Heart left ventricle (tissue), 16 donors: ENCODE measurements at regions of chr19 and their contacts with region 1.

Region 1: GRCh38 chr19:55605207-55605636 is 225 bp upstream of the ZNF865 start:
- DNase-seq: peak; percentile 98 to 99 (median 99)
- ATAC-seq: peak; percentile 84 to 92 (median 86)
- H3K4me3 ChIP-seq: peak overlapping the region; percentile 72 to 96 (median 83)
- H3K27ac ChIP-seq: peak overlapping the region; percentile 90 to 98 (median 96)
- H3K4me1 ChIP-seq: peaks cover 4 to 46% (median 31%) of the 10 kb centered on the region in 12 donors
- H3K27me3 ChIP-seq: no peaks in the 10 kb centered on the region
- CTCF ChIP-seq: no peak
- POLR2A ChIP-seq: peak in 1 of 2 donors; percentile 53

Region 2: GRCh38 chr19:55624109-55625003 is 19.1 kb after region 1 on chr19 and contains the start of gene ZNF784:
- intact Hi-C with region 1: loop called in 1 of 10 experiments (anchors 2 kb)
- DNase-seq: peak; percentile 92 to 98 (median 94)
- ATAC-seq: peak; percentile 87 to 97 (median 92)
- H3K4me3 ChIP-seq: peak within 1 kb of the TSS; percentile 7 to 73 (median 63)
- H3K27ac ChIP-seq: peak within 1 kb of the TSS; percentile 78 to 96 (median 92)
- H3K4me1 ChIP-seq: peaks cover 0 to 45% (median 11%) of the 10 kb centered on the region in 12 donors
- H3K27me3 ChIP-seq: no peaks in the 10 kb centered on the region
- CTCF ChIP-seq: no peak
- POLR2A ChIP-seq: peak in 1 of 2 donors; percentile 42
- total RNA-seq, gene ZNF784: 6.7 to 15.8 (median 9.2) TPM

Region 3: DNA sequence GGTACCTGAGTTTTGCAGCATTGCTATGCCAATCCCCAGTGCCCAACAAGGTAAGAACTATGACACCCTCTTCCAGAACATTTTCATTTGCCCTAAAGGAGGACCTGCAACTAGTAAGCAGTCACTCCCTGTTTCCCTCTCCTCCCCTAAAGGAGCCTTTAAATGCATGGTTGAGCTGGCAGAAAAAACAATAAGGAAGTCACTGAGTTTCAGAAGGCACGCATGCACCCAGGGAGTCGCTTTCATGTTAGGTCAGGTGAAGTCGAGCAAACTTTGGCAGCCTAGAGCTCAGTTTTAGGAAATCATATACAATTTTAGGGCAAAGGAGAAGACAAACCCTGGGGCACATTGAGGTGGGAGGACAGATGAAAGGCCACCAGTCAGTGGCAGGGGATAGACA is 214.8 kb after region 1 on chr19:
- intact Hi-C with region 1: no loop called
- DNase-seq: no peak
- ATAC-seq: no peak
- H3K4me3 ChIP-seq: no peak overlapping the region
- H3K27ac ChIP-seq: no peak overlapping the region
- H3K4me1 ChIP-seq: no peaks in the 10 kb centered on the region
- H3K27me3 ChIP-seq: no peaks in the 10 kb centered on the region
- CTCF ChIP-seq: no peak
- POLR2A ChIP-seq: no peak